GM10248 (cell line): ENCODE measurements at regions of chr2 and their contacts with region 1.

Region 1: GRCh38 chr2:207448006-207448405 is 81.8 kb upstream of the CREB1 start:
- DNase-seq: no peak
- CTCF ChIP-seq: no peak

Region 2: GRCh38 chr2:207459990-207460757 is 12.2 kb after region 1 on chr2:
- CTCF ChIA-PET with region 1: interaction called, 10 read pairs
- POLR2A ChIA-PET with region 1: no interaction called
- DNase-seq: peak; percentile 32
- CTCF ChIP-seq: no peak

Region 3: GRCh38 chr2:207479198-207479785 is 31.3 kb after region 1 on chr2:
- CTCF ChIA-PET with region 1: no interaction called
- POLR2A ChIA-PET with region 1: no interaction called
- DNase-seq: no peak
- CTCF ChIP-seq: no peak